Activated naive CD4-positive, alpha-beta T cell treated with anti-CD3 and anti-CD28 coated beads for 36 hours (primary cell): ENCODE measurements at regions of chr20 and their contacts with region 1.

Region 1: DNA sequence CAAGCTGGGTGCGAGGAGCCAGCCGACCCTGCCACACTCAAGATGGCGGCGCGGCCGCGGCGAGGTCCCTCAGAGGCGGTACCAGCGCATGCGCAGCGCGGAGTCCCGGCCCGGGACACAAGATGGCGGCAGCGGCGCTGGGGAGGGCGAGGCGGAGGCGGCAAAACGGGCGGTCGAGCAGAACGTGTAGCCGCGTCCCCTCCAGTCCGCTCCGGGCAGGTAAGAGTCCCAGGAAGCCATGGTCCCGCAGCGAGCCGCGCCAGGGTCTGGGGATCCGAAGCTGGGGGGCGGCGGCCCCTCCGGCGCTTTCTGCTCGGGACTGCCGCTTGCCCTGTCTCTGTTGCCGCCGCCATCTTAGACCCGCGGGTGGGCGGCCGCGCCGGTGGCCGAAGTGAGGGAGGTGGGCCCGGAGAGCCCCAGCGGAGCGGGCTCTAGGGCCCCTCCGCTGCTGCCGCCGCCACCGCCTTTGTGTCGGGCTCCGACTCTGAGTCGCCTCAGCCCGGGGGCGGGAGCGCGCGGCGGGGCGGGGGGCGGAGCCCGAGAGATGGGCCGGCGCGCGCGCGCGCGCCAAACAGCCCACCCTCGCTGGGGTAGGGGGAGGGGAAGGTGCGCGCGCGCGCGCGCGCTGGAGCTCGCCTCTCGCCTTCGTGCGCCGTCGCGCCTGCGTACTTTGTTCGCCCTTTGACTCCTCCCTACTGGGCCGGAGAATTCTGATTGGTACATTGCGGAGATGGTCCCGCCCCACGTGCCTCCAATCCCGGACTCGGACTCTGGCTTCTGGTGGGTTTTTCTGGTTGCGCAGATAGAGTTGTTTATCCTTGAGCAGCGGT is at the start of gene PCIF1:
- DNase-seq: peak; percentile 99
- H3K4me3 Mint-ChIP-seq: peak within 1 kb of the TSS; percentile 93
- H3K27ac Mint-ChIP-seq: peak within 1 kb of the TSS; percentile 95
- H3K4me1 Mint-ChIP-seq: peaks cover 30% of the 10 kb centered on the region
- H3K27me3 Mint-ChIP-seq: no peaks in the 10 kb centered on the region
- total RNA-seq, gene PCIF1: 39.2 to 39.5 TPM

Region 2: GRCh38 chr20:45704969-45705637 is 229.7 kb before region 1 on chr20 and contains the start of gene WFDC10B:
- CTCF ChIA-PET with region 1: no interaction called
- intact Hi-C with region 1: no loop called
- DNase-seq: no peak
- H3K4me3 Mint-ChIP-seq: no peak within 1 kb of the TSS
- H3K27ac Mint-ChIP-seq: no peak within 1 kb of the TSS
- H3K4me1 Mint-ChIP-seq: no peaks in the 10 kb centered on the region
- H3K27me3 Mint-ChIP-seq: peaks cover 22% of the 10 kb centered on the region
- total RNA-seq, gene WFDC10B: not detected

Region 3: DNA sequence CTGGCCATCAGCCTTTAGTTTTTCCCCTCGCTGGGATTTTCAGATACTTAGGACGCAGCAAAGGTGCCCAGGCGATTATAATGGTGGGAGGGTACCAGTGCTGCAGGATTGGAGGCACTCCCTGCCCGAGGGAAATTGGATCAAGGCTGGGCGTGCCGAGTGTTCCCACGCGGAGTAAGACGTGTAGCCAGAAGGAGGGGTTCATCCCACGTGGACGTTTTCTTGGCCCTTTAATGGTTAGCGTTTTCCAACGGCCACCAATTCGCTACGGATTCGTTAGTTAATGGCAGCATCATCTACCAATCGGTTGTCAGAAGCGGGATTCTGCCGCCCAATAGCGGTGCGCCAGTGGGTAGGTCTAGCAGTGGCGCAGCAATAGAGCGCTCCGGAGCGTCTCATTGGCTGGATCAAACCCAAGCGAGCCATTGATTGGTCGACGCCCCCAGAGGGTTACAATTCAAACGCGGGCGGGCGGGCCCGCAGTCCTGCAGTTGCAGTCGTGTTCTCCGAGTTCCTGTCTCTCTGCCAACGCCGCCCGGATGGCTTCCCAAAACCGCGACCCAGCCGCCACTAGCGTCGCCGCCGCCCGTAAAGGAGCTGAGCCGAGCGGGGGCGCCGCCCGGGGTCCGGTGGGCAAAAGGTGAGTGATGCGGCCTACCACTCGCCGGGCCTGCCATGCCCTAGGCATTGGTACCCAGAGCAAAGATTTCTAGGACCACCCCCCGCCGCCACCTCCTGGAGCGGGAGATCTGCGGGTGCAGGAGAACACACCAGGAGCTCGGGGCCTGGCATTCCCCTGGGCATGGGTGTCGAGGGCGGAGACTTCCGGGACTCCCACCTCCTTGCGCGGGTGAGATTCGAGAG is 122.4 kb before region 1 on chr20 and contains the start of gene UBE2C:
- CTCF ChIA-PET with region 1: no interaction called
- intact Hi-C with region 1: loop called (anchors 1 kb)
- DNase-seq: peak; percentile 98
- H3K4me3 Mint-ChIP-seq: peak within 1 kb of the TSS; percentile 94
- H3K27ac Mint-ChIP-seq: peak within 1 kb of the TSS; percentile 82
- H3K4me1 Mint-ChIP-seq: peaks cover 17% of the 10 kb centered on the region
- H3K27me3 Mint-ChIP-seq: no peaks in the 10 kb centered on the region
- total RNA-seq, gene UBE2C: 189 to 202 TPM

Region 4: GRCh38 chr20:45880988-45881788 is 53.6 kb before region 1 on chr20 and contains the start of gene ZSWIM1:
- CTCF ChIA-PET with region 1: no interaction called
- intact Hi-C with region 1: loop called (anchors 1 kb)
- DNase-seq: peak; percentile 100
- H3K4me3 Mint-ChIP-seq: peak within 1 kb of the TSS; percentile 94
- H3K27ac Mint-ChIP-seq: peak within 1 kb of the TSS; percentile 93
- H3K4me1 Mint-ChIP-seq: peaks cover 48% of the 10 kb centered on the region
- H3K27me3 Mint-ChIP-seq: no peaks in the 10 kb centered on the region
- total RNA-seq, gene ZSWIM1: 8.2 to 8.4 TPM

Region 5: GRCh38 chr20:45910670-45911485 is 23.9 kb before region 1 on chr20:
- CTCF ChIA-PET with region 1: interaction called, 3 read pairs
- intact Hi-C with region 1: loop called (anchors 1 kb)
- DNase-seq: peak; percentile 97
- H3K4me3 Mint-ChIP-seq: peak overlapping the region; percentile 82
- H3K27ac Mint-ChIP-seq: peak overlapping the region; percentile 25
- H3K4me1 Mint-ChIP-seq: peaks cover 20% of the 10 kb centered on the region
- H3K27me3 Mint-ChIP-seq: peaks cover 16% of the 10 kb centered on the region

Region 6: GRCh38 chr20:46013826-46014516 is 79.2 kb after region 1 on chr20:
- CTCF ChIA-PET with region 1: interaction called, 3 read pairs
- intact Hi-C with region 1: loop called (anchors 5 kb)
- DNase-seq: peak; percentile 71
- H3K4me3 Mint-ChIP-seq: no peak overlapping the region
- H3K27ac Mint-ChIP-seq: no peak overlapping the region
- H3K4me1 Mint-ChIP-seq: peaks cover 36% of the 10 kb centered on the region
- H3K27me3 Mint-ChIP-seq: peaks cover 42% of the 10 kb centered on the region

Region 7: DNA sequence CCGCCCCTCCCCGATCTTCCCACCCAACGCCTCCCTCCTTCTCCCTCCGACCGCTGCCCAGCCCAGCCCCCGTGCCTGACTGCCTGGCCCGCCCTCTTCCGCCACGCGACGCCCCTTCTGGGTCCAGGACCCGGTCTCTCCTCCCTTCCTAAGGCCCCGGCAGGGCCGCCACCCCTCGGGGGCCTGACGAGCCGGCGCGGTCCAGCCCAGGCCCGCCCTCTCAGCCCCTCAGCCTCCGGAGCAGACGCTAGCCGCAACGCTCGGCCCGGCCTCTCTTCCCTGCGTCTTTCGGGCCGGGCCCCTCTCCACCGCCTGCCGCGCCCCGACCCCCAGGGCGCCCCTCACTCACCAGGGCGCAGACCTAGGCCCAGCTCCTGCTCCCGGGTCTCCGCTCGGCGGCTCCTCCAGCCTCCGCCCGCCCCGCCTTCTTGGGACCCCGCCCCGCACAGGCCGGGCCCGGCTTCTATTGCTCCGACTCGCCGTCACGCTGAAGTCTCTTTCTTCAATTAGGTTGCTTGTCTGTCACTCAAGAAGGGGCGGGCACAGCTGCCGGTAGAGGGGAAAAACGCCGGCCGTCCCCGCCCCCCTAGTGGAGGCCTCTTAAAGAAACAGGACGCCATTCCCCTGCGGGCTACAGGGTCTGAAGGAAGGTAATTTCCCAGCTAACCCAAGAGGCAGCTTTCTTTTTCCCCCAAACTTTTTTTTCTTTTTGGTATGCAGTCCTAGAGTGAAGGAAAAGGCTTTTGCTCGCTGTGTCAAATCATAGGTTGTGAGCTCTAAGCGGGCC is 471.6 kb after region 1 on chr20 and contains the start of gene ELMO2:
- CTCF ChIA-PET with region 1: interaction called, 3 read pairs
- intact Hi-C with region 1: loop called (anchors 1 kb)
- DNase-seq: peak; percentile 98
- H3K4me3 Mint-ChIP-seq: peak within 1 kb of the TSS; percentile 88
- H3K27ac Mint-ChIP-seq: peak within 1 kb of the TSS; percentile 88
- H3K4me1 Mint-ChIP-seq: peaks cover 55% of the 10 kb centered on the region
- H3K27me3 Mint-ChIP-seq: no peaks in the 10 kb centered on the region
- total RNA-seq, gene ELMO2: 76.8 to 81.0 TPM

Region 8: GRCh38 chr20:46583411-46584214 is 648.8 kb after region 1 on chr20:
- CTCF ChIA-PET with region 1: no interaction called
- intact Hi-C with region 1: no loop called
- DNase-seq: no peak
- H3K4me3 Mint-ChIP-seq: no peak overlapping the region
- H3K27ac Mint-ChIP-seq: no peak overlapping the region
- H3K4me1 Mint-ChIP-seq: no peaks in the 10 kb centered on the region
- H3K27me3 Mint-ChIP-seq: peaks cover 5% of the 10 kb centered on the region